Activated B cell treated with CpG ODN at 0.5 μM for 24 hours (primary cell): ENCODE measurements at regions of chr14 and their contacts with region 1.

Region 1: GRCh38 chr14:89365061-89365801 is 51.8 kb downstream of the FOXN3 start:
- DNase-seq: peak; percentile 43
- ATAC-seq: peak; percentile 93
- H3K4me3 Mint-ChIP-seq: peak overlapping the region; percentile 80
- H3K27ac Mint-ChIP-seq: peak overlapping the region; percentile 94
- H3K4me1 Mint-ChIP-seq: peaks cover 67% of the 10 kb centered on the region
- H3K27me3 Mint-ChIP-seq: no peaks in the 10 kb centered on the region
- CTCF ChIP-seq: no peak

Region 2: GRCh38 chr14:89137514-89138163 is 227.6 kb before region 1 on chr14:
- CTCF ChIA-PET with region 1: no interaction called
- POLR2A ChIA-PET with region 1: no interaction called
- intact Hi-C with region 1: no loop called
- DNase-seq: no peak
- ATAC-seq: no peak
- H3K4me3 Mint-ChIP-seq: no peak overlapping the region
- H3K27ac Mint-ChIP-seq: no peak overlapping the region
- H3K4me1 Mint-ChIP-seq: no peaks in the 10 kb centered on the region
- H3K27me3 Mint-ChIP-seq: peaks cover 7% of the 10 kb centered on the region
- CTCF ChIP-seq: no peak

Region 3: DNA sequence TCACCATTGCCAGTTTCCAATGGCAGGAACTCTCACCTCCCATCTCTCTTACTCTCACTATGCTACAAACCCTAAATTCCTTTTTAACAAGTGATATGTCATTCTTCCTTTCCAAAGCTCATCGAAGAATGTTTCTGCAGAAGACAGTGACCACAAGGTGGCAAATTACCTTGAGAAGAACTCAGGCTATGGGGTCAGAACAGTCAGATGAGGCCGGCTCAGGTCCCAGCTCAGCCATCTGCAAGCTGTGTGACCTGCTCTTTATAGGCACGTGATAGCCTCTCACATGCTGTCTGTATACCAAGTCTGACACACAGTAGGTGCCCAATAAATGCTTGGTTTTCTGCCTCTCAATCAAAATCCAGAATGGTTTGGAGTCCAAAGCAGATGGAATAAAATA is 28.9 kb before region 1 on chr14:
- CTCF ChIA-PET with region 1: interaction called, 8 read pairs
- POLR2A ChIA-PET with region 1: interaction called, 4 read pairs
- intact Hi-C with region 1: loop called (anchors 2 kb)
- DNase-seq: no peak
- ATAC-seq: peak; percentile 69
- H3K4me3 Mint-ChIP-seq: no peak overlapping the region
- H3K27ac Mint-ChIP-seq: peak overlapping the region; percentile 66
- H3K4me1 Mint-ChIP-seq: peaks cover 71% of the 10 kb centered on the region
- H3K27me3 Mint-ChIP-seq: no peaks in the 10 kb centered on the region
- CTCF ChIP-seq: no peak

Region 4: DNA sequence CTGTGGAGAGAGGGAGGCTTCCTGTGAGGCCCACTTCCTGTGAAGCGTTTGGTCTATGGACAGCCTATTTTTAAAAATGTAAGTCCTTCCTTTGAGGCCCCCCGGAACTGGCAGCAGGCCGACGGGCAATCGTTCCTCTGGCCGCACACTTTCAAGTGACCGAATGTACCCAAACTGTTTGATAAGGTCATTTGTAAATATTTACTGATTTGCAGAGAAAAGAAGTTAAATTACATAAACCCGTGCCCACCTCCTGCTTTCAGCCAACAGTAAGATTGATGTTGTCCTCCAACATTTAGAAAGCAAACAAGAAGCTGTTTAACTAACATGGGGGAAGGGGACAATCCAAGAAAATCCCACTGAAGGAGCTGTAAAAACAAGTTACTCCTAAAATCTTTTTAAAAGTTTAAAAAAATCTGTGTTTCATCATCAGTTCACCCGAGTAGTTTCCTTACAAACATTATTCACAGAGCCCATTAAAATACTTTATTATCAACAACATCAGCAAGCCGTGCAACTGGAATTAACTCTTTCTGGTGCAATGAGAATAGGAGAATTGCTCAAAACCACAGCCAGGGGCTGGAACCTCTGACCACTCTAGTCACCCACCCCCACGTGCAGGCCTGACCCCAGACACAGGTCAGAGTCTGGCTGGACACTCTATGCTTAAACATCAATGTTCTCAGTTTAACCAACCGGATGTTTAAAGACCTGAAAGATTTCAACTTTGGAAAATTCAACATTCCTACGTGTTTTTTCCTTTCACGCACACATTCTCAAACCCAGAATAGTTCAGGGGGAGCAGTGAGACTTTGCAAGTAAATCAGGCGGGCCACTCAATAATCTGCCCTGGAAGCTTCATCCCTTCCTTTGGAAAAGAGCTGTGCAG is 13.5 kb before region 1 on chr14:
- CTCF ChIA-PET with region 1: no interaction called
- POLR2A ChIA-PET with region 1: interaction called, 8 read pairs
- intact Hi-C with region 1: loop called (anchors 1 kb)
- DNase-seq: no peak
- ATAC-seq: peak; percentile 77
- H3K4me3 Mint-ChIP-seq: peak overlapping the region; percentile 77
- H3K27ac Mint-ChIP-seq: peak overlapping the region; percentile 94
- H3K4me1 Mint-ChIP-seq: peaks cover 63% of the 10 kb centered on the region
- H3K27me3 Mint-ChIP-seq: no peaks in the 10 kb centered on the region
- CTCF ChIP-seq: no peak